Activated naive CD8-positive, alpha-beta T cell treated with anti-CD3 and anti-CD28 coated beads, Interleukin-2, amount 10 ng/mL, durations not matched to agents 7 days and 5 days (primary cell): ENCODE measurements at regions of chr17 and their contacts with region 1.

Region 1: GRCh38 chr17:35930211-35931065 is at the start of gene RDM1:
- DNase-seq: peak; percentile 96
- ATAC-seq: peak; percentile 98
- H3K4me3 Mint-ChIP-seq: peak within 1 kb of the TSS; percentile 84
- H3K27ac Mint-ChIP-seq: peak within 1 kb of the TSS; percentile 86
- H3K4me1 Mint-ChIP-seq: peaks cover 28% of the 10 kb centered on the region
- H3K27me3 Mint-ChIP-seq: peaks cover 2% of the 10 kb centered on the region
- total RNA-seq, gene RDM1: 17.3 to 25.0 TPM

Region 2: GRCh38 chr17:35808962-35809854 is 121.2 kb before region 1 on chr17 and contains the start of gene TAF15:
- POLR2A ChIA-PET with region 1: interaction called, 10 read pairs
- DNase-seq: peak; percentile 98
- ATAC-seq: peak; percentile 92
- H3K4me3 Mint-ChIP-seq: peak within 1 kb of the TSS; percentile 93
- H3K27ac Mint-ChIP-seq: peak within 1 kb of the TSS; percentile 99
- H3K4me1 Mint-ChIP-seq: peaks cover 46% of the 10 kb centered on the region
- H3K27me3 Mint-ChIP-seq: no peaks in the 10 kb centered on the region
- total RNA-seq, gene TAF15: 291 to 299 TPM

Region 3: GRCh38 chr17:35849469-35850348 is 80.7 kb before region 1 on chr17:
- POLR2A ChIA-PET with region 1: interaction called, 10 read pairs
- DNase-seq: no peak
- ATAC-seq: peak; percentile 86
- H3K4me3 Mint-ChIP-seq: peak overlapping the region; percentile 24
- H3K27ac Mint-ChIP-seq: peak overlapping the region; percentile 80
- H3K4me1 Mint-ChIP-seq: peaks cover 11% of the 10 kb centered on the region
- H3K27me3 Mint-ChIP-seq: no peaks in the 10 kb centered on the region

Region 4: DNA sequence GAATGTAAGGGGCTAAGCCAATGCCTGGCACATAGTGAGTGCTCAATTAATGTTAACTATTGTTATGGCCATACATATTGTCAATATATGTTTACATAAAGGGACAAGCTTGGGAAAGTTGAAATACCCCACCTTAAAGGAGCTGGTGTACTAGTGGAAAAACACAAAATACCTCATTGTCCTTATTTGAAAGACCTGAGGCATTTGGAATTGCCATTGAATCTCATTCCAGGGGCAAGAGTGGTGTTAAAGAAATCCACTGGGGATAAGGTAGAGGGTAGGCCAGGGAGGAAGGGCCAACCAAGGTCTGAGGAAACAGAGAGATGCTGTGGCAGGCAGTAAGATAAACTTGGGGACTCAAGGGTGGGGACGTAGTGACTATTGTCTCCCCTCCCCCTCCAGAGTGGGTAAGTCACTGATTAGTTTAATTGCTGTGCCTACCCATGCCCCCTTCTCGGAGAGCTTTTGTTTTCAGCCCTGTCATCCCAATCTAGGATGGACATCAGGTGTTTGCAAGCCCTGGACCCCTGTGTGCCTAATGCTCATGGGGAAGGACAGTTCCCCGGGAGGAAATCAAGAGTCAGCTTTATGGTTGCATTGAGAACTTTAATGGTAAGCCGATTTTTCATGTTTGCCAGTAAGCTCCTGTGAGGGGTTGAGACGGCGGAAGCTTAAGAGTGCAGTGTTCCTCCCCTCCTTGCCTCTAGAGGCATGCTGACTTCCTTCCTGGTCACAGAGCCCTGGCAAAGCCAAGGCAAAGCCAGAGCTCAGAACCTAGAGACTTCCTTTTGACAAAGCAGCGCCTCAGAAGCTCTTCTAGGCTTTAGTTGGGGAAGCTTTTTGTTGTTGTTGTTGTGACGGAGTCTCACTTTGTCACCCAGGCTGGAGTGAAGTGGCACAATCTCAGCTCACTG is 59.3 kb before region 1 on chr17:
- POLR2A ChIA-PET with region 1: interaction called, 10 read pairs
- DNase-seq: peak; percentile 45
- ATAC-seq: peak; percentile 93
- H3K4me3 Mint-ChIP-seq: peak overlapping the region; percentile 29
- H3K27ac Mint-ChIP-seq: peak overlapping the region; percentile 32
- H3K4me1 Mint-ChIP-seq: peaks cover 38% of the 10 kb centered on the region
- H3K27me3 Mint-ChIP-seq: no peaks in the 10 kb centered on the region

Region 5: GRCh38 chr17:35879773-35880654 is 50.4 kb before region 1 on chr17 and contains the start of gene CCL5:
- POLR2A ChIA-PET with region 1: interaction called, 15 read pairs
- DNase-seq: peak; percentile 67
- ATAC-seq: peak; percentile 80
- H3K4me3 Mint-ChIP-seq: peak within 1 kb of the TSS; percentile 81
- H3K27ac Mint-ChIP-seq: peak within 1 kb of the TSS; percentile 85
- H3K4me1 Mint-ChIP-seq: peaks cover 53% of the 10 kb centered on the region
- H3K27me3 Mint-ChIP-seq: no peaks in the 10 kb centered on the region
- total RNA-seq, gene CCL5: 782 to 938 TPM

Region 6: GRCh38 chr17:35889818-35890763 is 40.3 kb before region 1 on chr17:
- POLR2A ChIA-PET with region 1: interaction called, 15 read pairs
- DNase-seq: no peak
- ATAC-seq: peak; percentile 12
- H3K4me3 Mint-ChIP-seq: peak overlapping the region; percentile 59
- H3K27ac Mint-ChIP-seq: peak overlapping the region; percentile 88
- H3K4me1 Mint-ChIP-seq: peaks cover 55% of the 10 kb centered on the region
- H3K27me3 Mint-ChIP-seq: no peaks in the 10 kb centered on the region

Region 7: DNA sequence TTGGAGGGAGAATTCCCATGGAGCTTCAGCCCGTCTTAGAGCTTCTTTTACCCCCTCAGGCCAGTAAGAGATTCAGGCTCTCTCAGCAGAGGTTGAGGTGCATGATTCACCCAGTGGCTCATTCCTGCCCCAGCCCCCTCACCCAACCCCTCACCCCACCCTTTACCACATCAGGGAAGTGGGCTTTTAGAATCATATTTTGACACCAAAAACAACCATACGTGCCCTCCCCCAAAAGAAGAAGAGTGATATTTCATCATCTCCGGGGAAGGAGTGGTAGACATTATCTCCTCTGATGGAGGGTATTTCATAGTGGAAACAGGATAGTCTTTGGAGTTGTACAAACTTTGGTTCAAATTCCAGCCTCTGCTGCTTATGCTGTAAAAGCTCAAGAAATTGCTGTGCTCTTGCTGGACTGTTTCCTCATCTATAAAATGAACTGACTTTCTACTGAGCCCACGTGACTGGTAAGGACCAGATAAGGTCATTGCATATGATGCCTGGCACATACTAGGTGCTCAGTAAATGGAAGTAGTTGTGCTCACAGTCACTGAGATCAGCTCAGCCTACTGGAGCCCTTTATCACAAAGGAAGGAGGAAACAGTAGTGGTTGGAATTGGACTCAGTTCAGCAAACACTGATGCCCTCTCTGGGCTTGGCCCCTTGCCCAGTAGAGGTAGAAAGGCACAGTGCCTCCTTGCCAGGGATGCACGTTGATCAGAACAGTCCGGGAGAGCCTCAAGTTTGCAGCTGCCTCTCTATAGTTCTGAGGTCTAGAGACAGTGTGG is 32.0 kb before region 1 on chr17:
- POLR2A ChIA-PET with region 1: interaction called, 29 read pairs
- DNase-seq: no peak
- ATAC-seq: peak; percentile 48
- H3K4me3 Mint-ChIP-seq: peak overlapping the region; percentile 80
- H3K27ac Mint-ChIP-seq: peak overlapping the region; percentile 89
- H3K4me1 Mint-ChIP-seq: peaks cover 65% of the 10 kb centered on the region
- H3K27me3 Mint-ChIP-seq: no peaks in the 10 kb centered on the region